ENCODE measurements at regions of chr15 and their contacts with region 1.

Region 1: DNA sequence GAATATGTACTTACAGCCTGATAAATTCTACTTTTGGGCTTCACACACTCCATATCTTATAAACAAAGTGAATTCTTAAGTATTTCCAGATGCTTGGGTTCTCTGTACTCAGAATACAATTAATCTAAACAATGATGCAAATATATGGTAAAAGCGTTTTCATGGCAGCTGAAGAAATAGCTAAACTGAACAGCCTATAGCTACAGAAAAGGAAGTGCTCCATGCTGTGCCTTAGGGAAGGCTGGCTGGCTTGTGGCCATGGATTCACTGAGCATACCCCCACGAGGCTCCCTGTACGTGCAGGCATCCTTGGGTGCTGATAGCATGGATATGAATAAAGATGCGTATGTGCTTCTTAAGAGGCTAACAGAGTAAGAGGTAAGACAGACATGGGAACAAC is 264.0 kb downstream of the KLF13 start:
- DNase-seq: peak; percentile 50
- H3K4me3 ChIP-seq: no peak overlapping the region
- H3K27ac ChIP-seq: peak overlapping the region; percentile 39
- H3K27me3 ChIP-seq: no peaks in the 10 kb centered on the region
- CTCF ChIP-seq: no peak

Region 2: GRCh38 chr15:31472636-31473384 is 117.8 kb before region 1 on chr15:
- CTCF ChIA-PET with region 1: no interaction called
- POLR2A ChIA-PET with region 1: no interaction called
- DNase-seq: no peak
- H3K4me3 ChIP-seq: no peak overlapping the region
- H3K27ac ChIP-seq: no peak overlapping the region
- H3K27me3 ChIP-seq: no peaks in the 10 kb centered on the region
- CTCF ChIP-seq: no peak

Region 3: DNA sequence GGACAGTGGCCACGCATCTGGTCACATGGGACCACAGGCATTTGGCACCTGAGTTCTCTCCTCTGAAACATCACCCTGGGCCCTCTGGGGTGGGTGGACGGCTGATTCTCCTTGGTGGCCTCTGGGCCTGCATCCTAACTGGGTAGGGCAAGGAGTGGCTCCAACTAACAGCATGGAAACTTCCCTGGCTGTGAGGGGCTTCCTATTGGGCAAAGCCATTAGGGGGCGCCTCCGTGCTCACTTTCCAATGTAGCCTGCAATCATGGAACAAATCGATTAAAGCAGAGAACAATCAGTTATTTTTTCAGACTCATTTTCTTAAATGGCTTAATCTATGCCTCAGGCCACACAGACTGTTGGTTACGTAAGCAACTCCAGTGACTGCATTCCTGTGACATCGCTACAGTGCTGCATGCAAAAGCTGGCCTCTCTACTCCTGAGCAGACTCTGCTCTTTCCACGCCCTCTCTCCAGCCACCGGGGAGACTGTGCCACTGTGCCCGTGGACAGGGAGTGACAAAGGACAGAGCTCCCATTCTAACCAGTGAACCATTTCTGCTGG is 14.8 kb after region 1 on chr15:
- CTCF ChIA-PET with region 1: interaction called, 3 read pairs
- POLR2A ChIA-PET with region 1: interaction called, 13 read pairs
- DNase-seq: no peak
- H3K4me3 ChIP-seq: no peak overlapping the region
- H3K27ac ChIP-seq: peak overlapping the region; percentile 94
- H3K27me3 ChIP-seq: no peaks in the 10 kb centered on the region
- CTCF ChIP-seq: peak; percentile 41